ENCODE measurements at regions of chr6 and their contacts with region 1.

Region 1: GRCh38 chr6:152863618-152864326 is 113.2 kb downstream of the VIP start:
- DNase-seq: no peak

Region 2: DNA sequence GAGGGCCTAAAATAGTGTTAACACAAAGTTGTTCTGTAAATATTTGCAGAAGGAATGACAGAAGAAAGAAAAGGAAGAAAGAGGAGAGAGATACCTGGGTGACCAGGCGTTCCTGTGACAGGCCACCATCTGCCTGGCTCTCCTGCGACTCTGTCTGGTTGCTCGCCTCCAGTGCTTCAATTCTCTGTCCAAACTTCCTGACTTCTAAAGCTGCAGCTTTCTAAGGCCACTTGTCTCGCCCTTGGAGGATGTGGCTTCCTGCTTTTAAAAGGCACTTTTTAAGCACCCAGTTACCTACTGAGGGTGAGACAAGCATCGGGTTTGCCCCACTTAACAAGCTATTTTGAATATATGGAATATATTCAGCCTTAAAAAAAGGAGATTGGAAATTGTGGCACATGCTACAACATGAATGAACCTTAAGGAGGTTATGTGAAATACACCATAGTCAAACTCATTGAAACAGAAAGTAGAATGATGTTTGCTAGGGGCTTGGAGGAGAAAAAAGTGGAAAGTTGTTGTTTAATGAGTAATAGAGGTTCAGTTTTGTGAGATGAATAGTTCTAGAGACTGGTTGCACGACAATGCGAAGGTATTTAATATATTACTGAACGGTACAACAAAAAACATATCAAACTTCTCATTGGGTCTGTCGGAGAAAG is 80.4 kb before region 1 on chr6:
- intact Hi-C with region 1: no loop called
- DNase-seq: no peak

Region 3: DNA sequence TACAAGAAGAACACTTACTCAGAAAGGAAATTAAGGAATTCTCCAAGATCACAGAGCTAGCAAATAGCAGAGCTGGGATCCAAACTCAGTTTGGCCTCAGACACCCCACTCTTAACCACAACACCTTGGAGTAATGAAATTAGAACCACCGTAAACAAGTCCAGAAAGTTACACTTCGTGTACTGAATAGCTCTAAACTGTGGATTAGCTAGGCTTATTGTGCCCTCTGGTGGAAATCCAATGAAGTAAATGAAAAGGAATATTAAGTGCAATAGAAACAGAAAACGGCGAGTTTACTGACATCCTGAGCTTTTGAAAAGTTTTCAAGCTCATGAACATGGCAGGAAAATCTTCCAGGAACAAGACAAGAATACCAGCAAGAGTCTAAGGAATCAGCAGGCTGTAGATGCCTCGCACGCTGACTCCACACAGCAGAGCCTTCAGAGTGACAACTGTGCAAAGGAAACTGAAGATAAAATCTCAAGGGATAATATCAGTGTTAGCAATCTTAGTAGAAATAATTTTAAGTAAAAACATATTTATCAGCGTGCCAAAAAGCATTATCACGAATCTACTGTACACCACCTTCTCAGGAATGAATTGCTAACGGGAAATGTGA is 84.5 kb after region 1 on chr6:
- intact Hi-C with region 1: loop called (anchors 2 kb)
- DNase-seq: no peak

Region 4: GRCh38 chr6:153023977-153024708 is 160.4 kb after region 1 on chr6:
- intact Hi-C with region 1: loop called (anchors 5 kb)
- DNase-seq: no peak